ENCODE measurements at regions of chr2 and their contacts with region 1.

Region 1: DNA sequence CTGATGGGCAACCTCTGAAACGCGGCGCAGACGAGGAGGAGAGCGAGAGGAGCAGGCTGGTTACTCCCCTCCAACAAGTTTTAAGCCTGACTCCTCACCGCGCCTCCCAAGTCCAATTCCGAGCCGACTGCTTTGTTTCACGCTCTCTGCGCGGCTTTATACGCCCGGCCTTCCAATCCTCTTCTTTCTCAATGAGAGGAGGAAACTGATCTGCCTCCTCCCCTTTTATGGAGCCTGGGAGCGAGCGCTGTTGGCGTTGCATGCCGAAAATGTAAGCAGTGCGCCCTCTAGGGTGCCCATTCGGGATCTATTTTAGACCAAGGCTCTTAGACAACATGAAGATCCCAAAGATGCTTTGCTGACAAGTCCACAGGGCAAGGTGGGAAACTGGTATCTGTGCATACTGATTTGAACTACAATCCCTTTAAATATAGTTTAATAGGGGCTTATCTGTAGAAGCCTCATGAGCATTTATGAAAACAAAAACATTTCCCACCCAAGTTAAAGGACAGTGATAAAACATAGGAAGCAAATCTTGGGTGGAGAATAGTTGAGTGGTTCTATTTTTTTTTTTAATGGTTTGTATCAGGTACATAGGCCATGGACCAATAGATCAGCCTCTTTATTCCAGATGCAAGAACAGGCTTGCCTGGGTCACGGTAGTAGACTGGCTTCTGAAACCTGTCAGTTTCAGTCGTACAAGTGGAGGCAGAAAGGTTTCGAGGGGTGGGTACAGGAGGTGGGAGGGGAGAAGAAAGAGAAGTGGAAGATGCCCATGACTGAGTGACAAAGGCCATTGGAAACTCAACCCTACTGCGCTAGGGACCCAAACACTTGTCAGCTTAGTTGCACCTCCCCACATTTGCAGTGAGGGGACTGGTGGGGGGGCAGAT is at the start of gene RND3:
- DNase-seq: peak; percentile 99
- H3K4me3 ChIP-seq: peak within 1 kb of the TSS; percentile 87 to 97 (median 95)
- H3K27ac ChIP-seq: peak within 1 kb of the TSS; percentile 85
- H3K4me1 ChIP-seq: peaks cover 32% of the 10 kb centered on the region
- H3K27me3 ChIP-seq: no peaks in the 10 kb centered on the region
- CTCF ChIP-seq: peak; percentile 81 to 90
- POLR2A ChIP-seq: peak; percentile 100
- total RNA-seq, gene RND3: 132 and 158 TPM in 2 replicates

Region 2: DNA sequence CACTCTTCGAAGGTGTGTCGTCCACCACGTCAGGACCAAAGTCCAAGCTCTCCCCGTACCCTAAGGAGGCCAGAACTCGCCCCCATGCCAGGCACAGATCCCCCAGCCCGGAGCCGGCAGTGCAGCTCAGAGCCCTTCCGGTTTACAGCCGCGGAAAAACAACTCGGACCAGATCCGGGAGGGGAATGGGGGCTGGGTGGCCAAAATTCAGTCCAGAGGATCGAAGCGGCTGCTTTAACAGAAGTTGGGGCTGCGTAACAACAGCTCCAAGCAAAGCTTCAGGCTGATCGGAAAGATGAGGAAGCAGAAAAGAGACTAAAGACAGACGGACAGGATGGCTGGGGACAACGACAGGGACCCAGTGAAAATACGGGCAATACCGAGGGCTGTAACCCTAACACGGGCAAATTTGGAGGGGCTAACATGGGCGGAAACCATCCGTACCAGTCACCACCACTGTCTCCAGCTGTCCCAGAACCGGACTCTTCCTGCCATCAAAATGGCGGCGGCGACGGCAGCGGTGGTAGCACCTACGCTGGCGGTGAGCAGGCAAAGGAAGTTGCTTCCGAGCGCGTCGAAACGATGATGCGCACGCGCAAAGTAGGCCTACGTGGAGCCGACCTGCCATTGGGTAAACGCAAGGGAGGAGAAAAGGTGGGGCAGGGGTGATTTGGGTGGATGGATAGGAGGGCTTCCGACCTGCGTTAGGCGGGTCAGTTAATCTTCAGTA is 900.4 kb before region 1 on chr2 and contains the start of gene MMADHC:
- CTCF ChIA-PET with region 1: no interaction called
- POLR2A ChIA-PET with region 1: interaction called, 3 read pairs
- dilution Hi-C with region 1: no loop called
- intact Hi-C with region 1: loop called (anchors 1 kb)
- DNase-seq: peak; percentile 94
- H3K4me3 ChIP-seq: peak within 1 kb of the TSS; percentile 46 to 92 (median 66)
- H3K27ac ChIP-seq: peak within 1 kb of the TSS; percentile 89
- H3K4me1 ChIP-seq: peaks cover 24% of the 10 kb centered on the region
- H3K27me3 ChIP-seq: no peaks in the 10 kb centered on the region
- CTCF ChIP-seq: no peak
- POLR2A ChIP-seq: peak; percentile 95
- total RNA-seq, gene MMADHC: 115 and 119 TPM in 2 replicates

Region 3: DNA sequence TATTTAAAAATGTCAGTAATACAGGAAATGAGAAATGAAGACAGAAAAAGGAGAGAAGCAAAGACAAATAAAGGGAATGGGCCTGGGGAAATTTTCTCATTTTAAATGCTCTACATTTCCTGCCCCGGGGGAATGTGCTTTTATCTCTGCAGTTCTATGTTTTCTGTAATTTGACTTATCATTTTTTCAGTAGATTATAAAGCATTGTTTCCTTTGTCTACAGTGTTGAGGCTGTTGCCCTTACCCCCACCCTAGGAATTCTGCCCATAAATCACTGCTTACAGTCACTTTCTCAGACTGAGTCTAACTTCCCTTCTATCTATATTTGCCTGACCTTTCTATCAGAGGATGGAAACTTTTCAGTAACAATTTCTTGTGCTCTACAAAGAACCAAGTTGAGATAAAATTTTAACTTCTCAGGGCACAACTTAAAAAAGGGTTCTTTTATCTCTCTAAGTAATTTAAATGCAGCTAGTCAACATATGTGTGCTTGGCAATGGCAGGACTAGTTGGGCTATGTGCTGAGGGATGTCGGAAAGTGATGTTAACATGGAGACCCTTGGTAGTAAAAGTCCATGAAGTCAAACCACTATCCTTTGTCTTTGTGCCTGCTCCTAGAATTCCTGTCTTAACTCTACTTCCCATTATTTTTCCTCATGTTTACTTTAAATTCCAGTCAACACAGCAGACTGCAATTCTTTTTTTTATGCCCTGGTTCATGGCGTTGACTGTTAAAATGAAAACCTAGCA is 753.7 kb before region 1 on chr2:
- CTCF ChIA-PET with region 1: no interaction called
- POLR2A ChIA-PET with region 1: no interaction called
- dilution Hi-C with region 1: no loop called
- intact Hi-C with region 1: loop called (anchors 2 kb)
- DNase-seq: peak; percentile 94
- H3K4me3 ChIP-seq: no peak overlapping the region
- H3K27ac ChIP-seq: peak overlapping the region; percentile 97
- H3K4me1 ChIP-seq: peaks cover 39% of the 10 kb centered on the region
- H3K27me3 ChIP-seq: no peaks in the 10 kb centered on the region
- CTCF ChIP-seq: no peak
- POLR2A ChIP-seq: no peak

Region 4: DNA sequence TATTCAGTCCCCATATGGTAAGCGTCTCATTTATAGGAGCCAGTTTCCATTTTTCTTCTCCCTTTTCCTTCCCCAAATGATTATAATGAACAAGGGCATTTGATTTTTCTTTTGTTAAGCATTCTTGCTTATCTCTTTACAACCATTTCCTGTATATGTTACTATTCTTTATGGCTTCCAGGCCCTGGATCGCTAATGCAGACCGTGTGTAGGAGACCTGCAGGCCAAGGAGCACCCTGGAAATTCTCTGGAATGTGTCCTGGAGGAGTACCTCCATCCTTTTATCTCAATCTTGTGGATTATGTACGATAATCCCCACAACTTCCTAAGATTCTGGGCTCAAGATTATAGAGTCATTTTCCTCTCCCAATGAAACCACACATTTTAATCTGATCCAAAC is 460.6 kb before region 1 on chr2:
- CTCF ChIA-PET with region 1: no interaction called
- POLR2A ChIA-PET with region 1: no interaction called
- dilution Hi-C with region 1: no loop called
- intact Hi-C with region 1: loop called (anchors 5 kb)
- DNase-seq: peak; percentile 82
- H3K4me3 ChIP-seq: no peak overlapping the region
- H3K27ac ChIP-seq: peak overlapping the region; percentile 28
- H3K4me1 ChIP-seq: peaks cover 21% of the 10 kb centered on the region
- H3K27me3 ChIP-seq: no peaks in the 10 kb centered on the region
- CTCF ChIP-seq: no peak
- POLR2A ChIP-seq: no peak

Region 5: GRCh38 chr2:150188177-150188576 is 299.6 kb before region 1 on chr2:
- CTCF ChIA-PET with region 1: no interaction called
- POLR2A ChIA-PET with region 1: no interaction called
- dilution Hi-C with region 1: no loop called
- intact Hi-C with region 1: loop called (anchors 2 kb)
- DNase-seq: peak; percentile 64
- H3K4me3 ChIP-seq: no peak overlapping the region
- H3K27ac ChIP-seq: no peak overlapping the region
- H3K4me1 ChIP-seq: peaks cover 10% of the 10 kb centered on the region
- H3K27me3 ChIP-seq: no peaks in the 10 kb centered on the region
- CTCF ChIP-seq: no peak
- POLR2A ChIP-seq: no peak

Region 6: DNA sequence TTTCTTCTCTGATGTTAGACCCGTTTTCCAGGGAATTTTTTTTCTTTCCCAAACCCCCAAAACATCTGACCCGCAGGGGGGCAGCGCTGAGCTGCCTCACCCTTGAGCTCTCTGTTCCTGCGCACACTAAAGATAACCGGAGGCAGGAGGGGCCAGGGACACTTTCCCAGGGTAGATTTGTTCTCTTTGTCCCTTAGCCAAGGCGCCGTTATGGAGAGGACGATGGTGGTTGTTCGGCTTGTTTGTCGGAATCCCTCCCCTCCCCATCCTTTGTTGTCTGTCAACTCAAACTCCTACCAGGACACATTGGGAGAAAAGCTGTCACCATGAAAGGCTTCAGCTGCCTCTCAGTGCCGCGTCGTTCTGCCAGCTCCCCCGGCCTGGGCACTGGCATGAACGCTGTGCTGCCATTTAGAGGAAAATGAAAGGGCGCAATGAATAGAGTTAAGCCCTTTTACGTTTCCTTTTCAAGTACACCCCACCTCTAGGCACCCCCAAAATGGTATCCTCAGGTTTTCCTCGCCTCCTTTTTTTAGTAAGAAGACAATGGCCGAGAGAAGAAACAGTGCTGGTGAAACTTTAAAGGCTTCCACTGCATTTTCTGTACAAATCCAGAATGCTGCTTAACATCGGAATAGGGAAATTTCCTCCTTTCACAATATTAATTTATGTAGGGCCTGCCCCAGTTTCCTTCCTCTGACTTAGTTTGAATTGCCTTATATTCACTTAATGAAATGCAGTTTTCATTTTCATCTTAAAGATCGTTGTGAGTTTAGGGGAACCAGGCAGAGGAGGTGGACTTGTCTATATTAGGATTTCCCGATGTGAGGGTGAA is 62.4 kb before region 1 on chr2:
- CTCF ChIA-PET with region 1: interaction called, 21 read pairs
- POLR2A ChIA-PET with region 1: interaction called, 3 read pairs
- dilution Hi-C with region 1: no loop called
- intact Hi-C with region 1: loop called (anchors 1 kb)
- DNase-seq: peak; percentile 76
- H3K4me3 ChIP-seq: peak overlapping the region in 2 of 3 experiments; percentile 30 to 55
- H3K27ac ChIP-seq: peak overlapping the region; percentile 77
- H3K4me1 ChIP-seq: peaks cover 17% of the 10 kb centered on the region
- H3K27me3 ChIP-seq: no peaks in the 10 kb centered on the region
- CTCF ChIP-seq: peak; percentile 47 to 49
- POLR2A ChIP-seq: peak; percentile 33

Region 7: DNA sequence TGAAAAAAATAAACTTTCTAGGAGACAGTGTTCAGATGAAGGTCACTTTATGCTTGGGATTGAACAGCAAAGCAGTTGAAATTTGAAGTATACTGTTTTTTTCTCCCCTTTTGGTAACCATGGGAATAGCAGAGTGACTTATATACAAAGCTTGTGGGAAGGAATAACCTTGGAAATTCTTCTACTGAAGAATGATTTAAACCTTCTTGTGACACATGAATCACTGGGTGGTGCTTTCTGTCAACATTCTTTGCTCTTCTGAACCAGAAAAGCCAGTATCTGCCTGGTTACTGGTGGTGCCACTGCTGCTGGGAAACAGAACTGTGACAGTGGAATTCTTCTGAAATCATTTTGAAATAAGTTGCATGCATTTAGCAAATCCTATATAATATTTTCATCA is 39.0 kb after region 1 on chr2:
- CTCF ChIA-PET with region 1: no interaction called
- POLR2A ChIA-PET with region 1: no interaction called
- dilution Hi-C with region 1: no loop called
- intact Hi-C with region 1: no loop called
- DNase-seq: peak; percentile 75
- H3K4me3 ChIP-seq: no peak overlapping the region
- H3K27ac ChIP-seq: no peak overlapping the region
- H3K4me1 ChIP-seq: no peaks in the 10 kb centered on the region
- H3K27me3 ChIP-seq: no peaks in the 10 kb centered on the region
- CTCF ChIP-seq: no peak
- POLR2A ChIP-seq: no peak

Region 8: DNA sequence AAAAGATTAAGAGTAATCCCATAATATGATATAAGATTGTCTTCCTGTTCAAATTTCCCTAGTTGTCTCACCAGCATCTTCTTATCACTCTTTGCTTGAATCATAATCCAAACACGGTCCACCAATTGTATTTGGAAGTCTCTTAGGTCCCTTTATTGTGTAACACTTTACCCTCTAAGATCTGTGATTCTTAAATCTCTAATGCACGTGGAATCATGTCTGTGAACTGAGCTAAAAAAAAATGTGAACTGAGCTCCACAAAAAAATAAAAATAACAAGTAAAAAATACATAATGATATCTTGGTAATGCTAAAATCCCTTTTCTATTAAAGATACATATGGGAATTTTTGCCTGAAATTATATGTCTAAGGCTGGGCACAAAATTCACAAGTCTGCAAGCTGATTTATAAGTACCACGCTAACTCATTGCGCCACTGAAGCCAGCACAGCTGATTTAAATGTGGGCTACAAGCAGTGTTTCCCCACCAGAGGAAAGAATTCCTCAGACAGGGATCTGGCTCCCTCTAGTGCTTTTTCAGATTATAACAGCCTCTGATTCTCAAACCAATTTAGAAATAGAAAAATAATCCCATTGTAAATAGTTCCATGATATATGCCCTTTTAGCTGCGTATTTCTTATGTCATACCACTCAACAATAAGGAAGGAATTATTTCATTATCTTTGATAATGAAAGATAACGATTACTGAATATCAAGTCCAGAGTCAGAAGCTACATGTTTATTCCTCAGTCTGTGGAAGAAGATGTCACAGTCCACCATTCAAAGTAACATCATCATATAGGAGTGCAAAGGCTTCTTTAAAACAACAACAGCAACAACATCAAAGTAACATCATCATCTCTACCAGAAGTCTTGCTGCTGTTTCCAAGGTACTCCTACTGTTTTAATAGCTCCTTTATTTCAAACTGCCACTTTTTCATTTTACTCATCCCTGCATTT is 751.0 kb after region 1 on chr2:
- CTCF ChIA-PET with region 1: interaction called, 11 read pairs
- POLR2A ChIA-PET with region 1: no interaction called
- dilution Hi-C with region 1: no loop called
- intact Hi-C with region 1: loop called (anchors 1 kb)
- DNase-seq: peak; percentile 80
- H3K4me3 ChIP-seq: no peak overlapping the region
- H3K27ac ChIP-seq: no peak overlapping the region
- H3K4me1 ChIP-seq: peaks cover 7% of the 10 kb centered on the region
- H3K27me3 ChIP-seq: no peaks in the 10 kb centered on the region
- CTCF ChIP-seq: peak; percentile 53 to 57
- POLR2A ChIP-seq: no peak